Naive thymus-derived CD4-positive, alpha-beta T cell (primary cell): ENCODE measurements at regions of chr2 and their contacts with region 1.

Region 1: GRCh38 chr2:118177884-118178283 is 89.6 kb downstream of the INSIG2 start:
- DNase-seq: no peak
- ATAC-seq: no peak
- H3K4me3 ChIP-seq: no peak overlapping the region
- H3K4me3 Mint-ChIP-seq: no peak overlapping the region
- H3K27ac ChIP-seq: no peak overlapping the region
- H3K27ac Mint-ChIP-seq: peak overlapping the region in 1 of 9 donors; percentile 15
- H3K4me1 ChIP-seq: no peaks in the 10 kb centered on the region
- H3K4me1 Mint-ChIP-seq: peaks cover 0 to 24% (median 4%) of the 10 kb centered on the region in 7 donors
- H3K27me3 ChIP-seq: no peaks in the 10 kb centered on the region
- H3K27me3 Mint-ChIP-seq: peaks cover 0 to 15% (median 9%) of the 10 kb centered on the region in 5 donors

Region 2: DNA sequence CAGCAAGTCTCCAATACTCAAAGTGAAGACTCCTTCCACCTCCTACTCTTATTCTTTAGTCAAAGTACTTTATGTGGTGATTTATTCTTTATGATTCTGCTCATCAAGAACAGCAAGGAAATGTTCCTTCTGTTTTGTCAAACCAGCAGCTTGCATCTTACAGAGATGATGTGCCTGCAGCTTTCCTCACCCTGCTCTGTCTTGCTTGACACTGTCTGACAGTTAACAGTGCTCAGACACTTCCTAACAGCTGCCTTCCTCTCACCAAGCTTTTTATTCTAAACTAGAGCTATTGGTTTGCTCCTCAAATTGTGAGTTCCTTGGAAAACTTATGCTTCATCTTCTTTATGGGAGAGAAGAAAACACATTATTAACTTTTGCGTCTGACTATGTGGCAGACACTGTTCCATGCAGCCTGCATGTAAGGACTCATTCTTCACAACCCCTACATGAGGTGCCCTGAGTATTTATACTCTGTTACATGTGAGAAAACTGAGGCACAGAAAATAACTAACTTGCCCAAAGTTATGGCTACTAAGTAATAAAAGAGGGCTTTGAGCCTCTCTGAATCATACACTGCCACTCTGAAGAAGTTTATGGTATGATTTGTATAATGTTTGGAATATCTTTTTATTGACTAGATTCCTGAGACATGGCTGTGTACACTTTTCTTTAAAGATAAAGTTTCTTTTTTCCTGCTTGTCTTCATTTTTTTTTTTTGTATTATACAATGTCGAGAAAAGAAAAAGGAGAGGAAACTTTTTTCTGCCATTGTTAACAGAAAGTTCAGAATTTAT is 1086.6 kb before region 1 on chr2:
- CTCF ChIA-PET with region 1: no interaction called
- POLR2A ChIA-PET with region 1: no interaction called
- intact Hi-C with region 1: no loop called
- DNase-seq: no peak
- ATAC-seq: no peak
- H3K4me3 ChIP-seq: no peak overlapping the region
- H3K4me3 Mint-ChIP-seq: no peak overlapping the region
- H3K27ac ChIP-seq: no peak overlapping the region
- H3K27ac Mint-ChIP-seq: no peak overlapping the region
- H3K4me1 ChIP-seq: no peaks in the 10 kb centered on the region
- H3K4me1 Mint-ChIP-seq: no peaks in the 10 kb centered on the region
- H3K27me3 ChIP-seq: no peaks in the 10 kb centered on the region
- H3K27me3 Mint-ChIP-seq: no peaks in the 10 kb centered on the region

Region 3: GRCh38 chr2:118013724-118014491 is 164.0 kb before region 1 on chr2 and contains the start of gene CCDC93:
- CTCF ChIA-PET with region 1: no interaction called
- POLR2A ChIA-PET with region 1: no interaction called
- intact Hi-C with region 1: no loop called
- DNase-seq: peak; percentile 82 to 95 (median 91)
- ATAC-seq: peak; percentile 88
- H3K4me3 ChIP-seq: peak within 1 kb of the TSS; percentile 90
- H3K4me3 Mint-ChIP-seq: peak within 1 kb of the TSS; percentile 87 to 98 (median 95)
- H3K27ac ChIP-seq: peak within 1 kb of the TSS; percentile 98
- H3K27ac Mint-ChIP-seq: peak within 1 kb of the TSS; percentile 59 to 96 (median 90)
- H3K4me1 ChIP-seq: peaks cover 6 to 9% of the 10 kb centered on the region in 2 donors
- H3K4me1 Mint-ChIP-seq: peaks cover 30 to 69% (median 41%) of the 10 kb centered on the region in 7 donors
- H3K27me3 ChIP-seq: no peaks in the 10 kb centered on the region
- H3K27me3 Mint-ChIP-seq: peaks cover 0 to 6% (median 1%) of the 10 kb centered on the region in 5 donors
- total RNA-seq, gene CCDC93: 34.8 to 73.9 (median 51.5) TPM

Region 4: DNA sequence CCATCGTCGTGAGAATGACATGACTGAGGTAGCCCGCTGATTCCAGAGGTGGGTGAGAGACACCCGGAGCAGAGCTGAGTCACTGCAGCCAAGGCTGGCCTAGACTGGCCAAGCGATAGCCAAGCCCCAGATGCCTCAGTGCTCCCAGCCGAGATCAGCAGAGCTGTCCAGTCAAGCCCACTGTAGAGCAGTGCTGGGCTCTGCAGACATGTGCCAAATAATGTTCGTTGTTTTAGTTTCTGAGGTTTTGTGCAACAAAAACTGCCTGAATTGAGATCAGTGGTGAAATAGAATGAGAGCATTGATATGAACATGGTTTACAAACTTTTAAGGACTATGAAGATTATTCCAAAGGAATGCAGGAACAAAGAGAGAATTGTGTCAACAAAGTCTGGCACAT is 47.5 kb before region 1 on chr2:
- CTCF ChIA-PET with region 1: no interaction called
- POLR2A ChIA-PET with region 1: no interaction called
- intact Hi-C with region 1: loop called in 1 of 2 experiments (anchors 5 kb)
- DNase-seq: no peak
- ATAC-seq: no peak
- H3K4me3 ChIP-seq: no peak overlapping the region
- H3K4me3 Mint-ChIP-seq: peak overlapping the region in 1 of 10 donors; percentile 47
- H3K27ac ChIP-seq: no peak overlapping the region
- H3K27ac Mint-ChIP-seq: peak overlapping the region in 2 of 9 donors; percentile 59 to 71
- H3K4me1 ChIP-seq: peaks cover 0 to 5% of the 10 kb centered on the region in 2 donors
- H3K4me1 Mint-ChIP-seq: peaks cover 0 to 20% (median 13%) of the 10 kb centered on the region in 7 donors
- H3K27me3 ChIP-seq: no peaks in the 10 kb centered on the region
- H3K27me3 Mint-ChIP-seq: peaks cover 21 to 46% (median 25%) of the 10 kb centered on the region in 5 donors